ENCODE measurements at regions of chr15 and their contacts with region 1.

Region 1: DNA sequence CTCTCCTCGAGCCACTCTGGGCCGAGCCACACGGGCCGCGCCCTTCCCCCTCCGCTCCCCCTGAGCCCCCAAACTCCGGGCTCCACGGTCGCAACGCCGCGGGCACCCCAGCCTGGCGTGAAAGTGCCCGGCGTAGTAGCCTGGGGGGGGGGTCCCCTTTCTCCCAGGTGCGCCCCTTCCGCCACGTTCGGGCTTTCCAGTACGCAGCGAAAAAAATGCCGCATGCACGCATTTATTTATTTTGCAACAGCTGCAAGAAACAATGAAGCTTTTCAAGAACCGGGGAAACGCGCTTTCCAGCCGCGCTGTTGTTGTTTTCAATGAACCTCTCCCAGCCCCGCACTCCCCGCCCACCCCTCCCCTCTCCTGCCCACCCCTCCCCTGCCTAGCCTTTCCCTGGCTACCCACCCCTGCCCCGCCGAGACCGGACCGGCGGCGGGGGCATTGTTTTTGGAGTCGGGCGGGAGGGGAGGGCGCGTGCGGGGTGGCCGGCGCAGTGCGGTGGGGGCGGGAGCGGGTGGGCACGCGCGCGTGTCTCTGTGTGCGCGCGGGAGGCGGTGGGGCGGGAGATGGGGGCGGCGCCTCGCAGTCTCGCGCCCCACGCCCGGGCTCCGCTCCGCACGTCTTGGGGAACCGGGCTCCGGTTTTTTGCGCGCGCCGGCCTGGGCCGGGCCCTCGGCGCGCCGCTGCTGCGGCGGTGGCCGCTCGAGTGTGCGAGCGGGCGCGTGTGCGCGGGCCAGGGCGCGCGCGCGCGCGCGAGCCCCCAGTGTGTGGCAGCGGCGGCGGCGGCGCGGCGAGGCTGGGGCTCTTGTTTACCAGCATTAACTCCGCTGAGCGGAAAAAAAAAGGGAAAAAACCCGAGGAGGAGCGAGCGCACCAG is at the start of gene IGF1R:
- DNase-seq: peak; percentile 86
- H3K4me3 Mint-ChIP-seq: peak within 1 kb of the TSS; percentile 80
- H3K27ac Mint-ChIP-seq: peak within 1 kb of the TSS; percentile 69
- H3K4me1 Mint-ChIP-seq: peaks cover 25% of the 10 kb centered on the region
- H3K27me3 Mint-ChIP-seq: peaks cover 60% of the 10 kb centered on the region
- total RNA-seq, gene IGF1R: 7.1 to 7.7 TPM

Region 2: DNA sequence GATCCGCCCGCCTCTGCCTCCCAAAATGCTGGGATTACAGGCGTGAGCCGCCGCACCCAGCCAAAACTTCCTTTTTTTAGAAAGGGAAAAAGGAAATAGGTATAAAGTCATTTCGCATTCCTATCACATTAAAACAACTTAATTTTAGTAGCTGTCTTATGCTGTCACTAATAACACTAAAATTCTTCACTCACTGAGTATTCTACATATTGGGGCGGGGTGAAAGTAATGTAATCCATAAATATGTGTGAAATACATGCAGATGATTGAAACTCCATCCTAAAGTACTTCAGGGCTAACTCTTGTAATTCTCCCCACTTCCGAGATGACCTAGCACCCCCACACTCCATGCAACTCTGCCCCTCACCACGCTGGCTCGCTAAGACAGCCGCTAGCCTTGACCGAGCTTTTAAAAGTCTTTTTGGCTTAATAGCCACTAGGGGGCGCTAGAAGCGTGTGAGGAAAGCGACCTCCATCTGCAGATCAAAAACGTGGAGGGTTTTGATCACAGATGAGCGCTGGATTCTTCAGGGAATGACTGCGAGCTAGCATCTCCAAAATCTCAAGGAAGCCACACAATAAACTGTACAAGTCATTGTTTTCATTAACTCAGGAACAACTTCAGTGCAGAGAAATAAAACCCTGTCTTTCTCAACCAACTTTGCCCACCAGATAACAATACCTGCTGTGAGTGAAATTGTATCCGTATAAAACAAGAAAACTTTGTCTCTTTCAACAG is 129.0 kb before region 1 on chr15:
- CTCF ChIA-PET with region 1: interaction called, 26 read pairs
- POLR2A ChIA-PET with region 1: no interaction called
- DNase-seq: peak; percentile 42
- H3K4me3 Mint-ChIP-seq: no peak overlapping the region
- H3K27ac Mint-ChIP-seq: no peak overlapping the region
- H3K4me1 Mint-ChIP-seq: peaks cover 4% of the 10 kb centered on the region
- H3K27me3 Mint-ChIP-seq: peaks cover 4% of the 10 kb centered on the region

Region 3: GRCh38 chr15:98620020-98620419 is 28.0 kb before region 1 on chr15:
- CTCF ChIA-PET with region 1: no interaction called
- POLR2A ChIA-PET with region 1: no interaction called
- DNase-seq: no peak
- H3K4me3 Mint-ChIP-seq: no peak overlapping the region
- H3K27ac Mint-ChIP-seq: no peak overlapping the region
- H3K4me1 Mint-ChIP-seq: no peaks in the 10 kb centered on the region
- H3K27me3 Mint-ChIP-seq: peaks cover 25% of the 10 kb centered on the region

Region 4: GRCh38 chr15:98658831-98659699 is 11.1 kb after region 1 on chr15:
- CTCF ChIA-PET with region 1: interaction called, 11 read pairs
- POLR2A ChIA-PET with region 1: interaction called, 3 read pairs
- DNase-seq: peak; percentile 26
- H3K4me3 Mint-ChIP-seq: no peak overlapping the region
- H3K27ac Mint-ChIP-seq: no peak overlapping the region
- H3K4me1 Mint-ChIP-seq: no peaks in the 10 kb centered on the region
- H3K27me3 Mint-ChIP-seq: peaks cover 25% of the 10 kb centered on the region

Region 5: GRCh38 chr15:98856218-98856907 is 208.3 kb after region 1 on chr15:
- CTCF ChIA-PET with region 1: interaction called, 11 read pairs
- POLR2A ChIA-PET with region 1: interaction called, 3 read pairs
- DNase-seq: no peak
- H3K4me3 Mint-ChIP-seq: no peak overlapping the region
- H3K27ac Mint-ChIP-seq: no peak overlapping the region
- H3K4me1 Mint-ChIP-seq: peaks cover 53% of the 10 kb centered on the region
- H3K27me3 Mint-ChIP-seq: no peaks in the 10 kb centered on the region

Measured in activated CD4-positive, alpha-beta memory T cell treated with anti-CD3 and anti-CD28 coated beads, Interleukin-2, amount 10 ng/mL, durations not matched to agents 7 days and 5 days (primary cell).